PC-9 (cell line): ENCODE measurements at regions of chr1 and their contacts with region 1.

Region 1: DNA sequence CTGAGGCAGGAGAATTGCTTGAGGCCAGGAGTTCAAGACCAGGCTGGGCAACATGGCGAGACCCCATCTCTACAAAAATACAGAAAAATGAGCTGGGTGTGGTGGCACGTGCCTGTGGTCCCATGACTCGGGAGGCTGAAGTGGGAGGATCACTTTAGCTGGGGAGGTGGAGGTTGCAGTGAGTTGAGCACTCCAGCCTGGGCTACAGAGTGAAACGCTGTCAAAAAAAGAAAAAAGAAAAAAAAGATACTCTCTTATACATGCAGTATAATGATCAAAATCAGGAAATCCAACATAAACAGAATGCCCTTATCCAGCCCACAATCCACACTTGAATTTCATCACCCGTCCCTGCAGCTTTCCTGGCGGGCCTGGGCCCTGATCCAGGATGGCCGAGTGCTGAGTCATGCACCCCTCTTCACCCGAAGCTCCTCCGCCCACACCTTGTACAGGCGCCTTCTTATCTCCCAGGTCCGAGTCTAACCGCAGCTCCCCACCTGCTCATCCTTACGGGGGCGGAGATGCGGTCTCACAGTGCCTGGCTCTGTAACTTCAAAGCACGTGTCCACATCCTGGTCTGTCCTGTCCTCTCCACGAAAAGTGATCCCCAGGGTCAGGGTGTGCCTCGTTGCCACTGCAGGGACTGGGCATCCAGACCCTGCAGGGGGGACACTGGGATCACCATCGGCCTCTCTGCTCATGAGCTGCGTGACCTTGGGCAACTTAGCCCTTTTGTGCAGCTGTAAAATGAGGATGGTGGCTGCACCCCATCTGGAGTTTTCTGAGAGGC is 120.2 kb upstream of the SLC45A1 start:
- DNase-seq: peak; percentile 85 to 93
- H3K4me3 ChIP-seq: no peak overlapping the region
- H3K27ac ChIP-seq: peak overlapping the region; percentile 99
- H3K4me1 ChIP-seq: peaks cover 89% of the 10 kb centered on the region
- H3K27me3 ChIP-seq: no peaks in the 10 kb centered on the region
- CTCF ChIP-seq: no peak

Region 2: DNA sequence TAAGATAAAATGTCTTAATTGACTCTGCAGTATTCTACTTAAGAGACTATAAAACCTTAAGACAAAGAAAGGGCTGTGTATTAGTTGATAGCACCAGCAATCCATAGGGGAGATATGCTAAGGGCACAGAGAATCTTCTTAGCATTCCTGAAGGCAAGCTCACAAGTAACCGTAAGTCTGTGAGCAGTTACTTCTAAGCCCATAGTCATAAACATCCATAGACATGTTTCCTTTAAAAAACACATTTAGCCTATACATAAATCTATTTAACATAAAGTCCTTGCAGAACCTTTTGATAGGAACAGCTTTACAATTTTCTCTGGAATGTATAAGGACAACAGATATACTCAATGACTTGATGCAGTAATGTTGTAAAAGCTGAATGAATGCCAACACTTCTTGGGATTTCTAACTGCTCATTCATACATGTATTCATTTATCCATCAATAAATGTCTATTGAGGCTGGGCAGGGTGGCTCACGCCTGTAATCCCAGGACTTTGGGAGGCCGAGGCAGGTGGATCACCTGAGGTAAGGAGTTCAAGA is 165.2 kb before region 1 on chr1:
- CTCF ChIA-PET with region 1: no interaction called
- POLR2A ChIA-PET with region 1: interaction called, 22 read pairs
- intact Hi-C with region 1: no loop called
- DNase-seq: no peak
- H3K4me3 ChIP-seq: no peak overlapping the region
- H3K27ac ChIP-seq: 0 out of 2 replicates have a peak overlapping the region, but pooled peaks have one; percentile 9
- H3K4me1 ChIP-seq: peaks cover 43% of the 10 kb centered on the region
- H3K27me3 ChIP-seq: no peaks in the 10 kb centered on the region
- CTCF ChIP-seq: no peak

Region 3: GRCh38 chr1:8097077-8097799 is 100.5 kb before region 1 on chr1:
- CTCF ChIA-PET with region 1: no interaction called
- POLR2A ChIA-PET with region 1: interaction called, 9 read pairs
- intact Hi-C with region 1: loop called (anchors 1 kb)
- DNase-seq: peak; percentile 50 to 98
- H3K4me3 ChIP-seq: peak overlapping the region; percentile 42; the same call in 1 of the 2 replicates
- H3K27ac ChIP-seq: peak overlapping the region; percentile 100
- H3K4me1 ChIP-seq: peaks cover 55% of the 10 kb centered on the region
- H3K27me3 ChIP-seq: no peaks in the 10 kb centered on the region
- CTCF ChIP-seq: no peak

Region 4: GRCh38 chr1:8137481-8138244 is 60.0 kb before region 1 on chr1:
- CTCF ChIA-PET with region 1: no interaction called
- POLR2A ChIA-PET with region 1: interaction called, 8 read pairs
- intact Hi-C with region 1: loop called (anchors 5 kb)
- DNase-seq: peak; percentile 55 to 94
- H3K4me3 ChIP-seq: peak overlapping the region; percentile 54; the same call in 1 of the 2 replicates
- H3K27ac ChIP-seq: peak overlapping the region; percentile 100
- H3K4me1 ChIP-seq: peaks cover 85% of the 10 kb centered on the region
- H3K27me3 ChIP-seq: no peaks in the 10 kb centered on the region
- CTCF ChIP-seq: no peak

Region 5: DNA sequence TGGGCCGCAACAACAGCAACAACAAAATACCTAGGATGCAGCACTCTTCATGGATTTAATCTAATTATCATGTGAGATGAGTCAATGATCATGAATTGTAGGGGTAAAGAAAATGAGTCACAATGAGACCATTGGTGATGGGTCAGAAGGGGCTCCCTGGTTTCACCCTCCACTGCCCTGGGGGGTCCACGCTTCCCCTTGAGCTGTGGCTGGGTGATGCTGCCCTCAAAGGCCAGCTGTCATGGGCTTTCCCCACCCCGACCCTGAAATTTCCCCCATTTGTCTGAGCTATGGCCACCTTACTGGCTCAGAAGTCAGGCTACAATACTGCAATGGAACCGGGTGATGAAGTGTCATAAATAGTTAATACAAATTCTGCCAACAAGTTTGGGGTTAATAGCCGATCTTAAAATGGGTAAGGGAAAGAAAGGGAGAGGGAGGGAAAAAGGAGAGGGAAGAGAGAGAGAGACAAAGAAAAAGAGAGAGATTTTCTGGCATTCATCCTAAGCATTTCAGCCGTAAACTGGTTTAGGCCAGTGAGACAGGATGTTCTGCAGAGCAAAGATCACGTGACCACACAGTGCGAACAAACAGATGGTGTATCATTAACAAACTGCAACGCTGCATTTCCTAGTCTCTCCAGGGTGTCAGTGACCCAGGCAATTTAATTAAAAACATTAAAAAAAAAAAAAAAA is 28.2 kb before region 1 on chr1:
- CTCF ChIA-PET with region 1: interaction called, 10 read pairs
- POLR2A ChIA-PET with region 1: no interaction called
- intact Hi-C with region 1: no loop called
- DNase-seq: peak; percentile 25 to 41
- H3K4me3 ChIP-seq: no peak overlapping the region
- H3K27ac ChIP-seq: peak overlapping the region; percentile 61
- H3K4me1 ChIP-seq: peaks cover 41% of the 10 kb centered on the region
- H3K27me3 ChIP-seq: no peaks in the 10 kb centered on the region
- CTCF ChIP-seq: no peak

Region 6: GRCh38 chr1:8211589-8212442 is 14.1 kb after region 1 on chr1:
- CTCF ChIA-PET with region 1: interaction called, 6 read pairs
- POLR2A ChIA-PET with region 1: interaction called, 13 read pairs
- intact Hi-C with region 1: no loop called
- DNase-seq: peak; percentile 84 to 95
- H3K4me3 ChIP-seq: peak overlapping the region; percentile 38; the same call in 1 of the 2 replicates
- H3K27ac ChIP-seq: peak overlapping the region; percentile 99
- H3K4me1 ChIP-seq: peaks cover 51% of the 10 kb centered on the region
- H3K27me3 ChIP-seq: no peaks in the 10 kb centered on the region
- CTCF ChIP-seq: no peak

Region 7: GRCh38 chr1:8259498-8260290 is 62.0 kb after region 1 on chr1:
- CTCF ChIA-PET with region 1: no interaction called
- POLR2A ChIA-PET with region 1: interaction called, 3 read pairs
- intact Hi-C with region 1: loop called (anchors 1 kb)
- DNase-seq: peak; percentile 80 to 82
- H3K4me3 ChIP-seq: peak overlapping the region; percentile 49; the same call in 1 of the 2 replicates
- H3K27ac ChIP-seq: peak overlapping the region; percentile 100
- H3K4me1 ChIP-seq: peaks cover 43% of the 10 kb centered on the region
- H3K27me3 ChIP-seq: no peaks in the 10 kb centered on the region
- CTCF ChIP-seq: no peak

Region 8: GRCh38 chr1:8302081-8302956 is 104.6 kb after region 1 on chr1:
- CTCF ChIA-PET with region 1: no interaction called
- POLR2A ChIA-PET with region 1: no interaction called
- intact Hi-C with region 1: no loop called
- DNase-seq: no peak
- H3K4me3 ChIP-seq: no peak overlapping the region
- H3K27ac ChIP-seq: no peak overlapping the region
- H3K4me1 ChIP-seq: peaks cover 6% of the 10 kb centered on the region; the same call in 1 of the 2 replicates
- H3K27me3 ChIP-seq: no peaks in the 10 kb centered on the region
- CTCF ChIP-seq: no peak